Aorta (tissue), 5 donors: ENCODE measurements at regions of chr17 and their contacts with region 1.

Region 1: DNA sequence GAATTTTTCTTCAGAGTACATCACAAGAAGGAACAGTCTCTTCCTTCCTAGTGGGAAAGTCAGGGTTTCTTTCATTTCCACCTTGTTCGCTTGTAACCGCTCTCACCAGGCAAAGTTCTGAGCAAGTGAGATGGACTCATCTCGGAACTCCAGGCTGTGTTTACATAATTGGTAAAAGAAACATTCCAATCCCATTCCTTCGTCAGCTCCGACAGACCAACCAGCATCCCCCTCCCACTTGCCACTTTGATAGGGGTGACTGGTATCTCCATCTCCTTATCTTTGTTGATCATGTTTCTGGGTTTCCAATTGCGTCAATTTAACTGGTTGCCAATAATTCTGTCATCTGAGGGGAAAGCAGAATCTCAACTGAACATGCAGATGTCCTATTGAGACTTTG is 36.8 kb upstream of the LYRM9 start:
- DNase-seq: no peak
- ATAC-seq: no peak
- H3K4me3 ChIP-seq: no peak overlapping the region
- H3K27ac ChIP-seq: no peak overlapping the region
- H3K4me1 ChIP-seq: no peaks in the 10 kb centered on the region
- H3K27me3 ChIP-seq: no peaks in the 10 kb centered on the region

Region 2: GRCh38 chr17:27974531-27975145 is 44.6 kb after region 1 on chr17:
- intact Hi-C with region 1: loop called in 1 of 2 experiments (anchors 5 kb)
- DNase-seq: no peak
- ATAC-seq: no peak
- H3K4me3 ChIP-seq: no peak overlapping the region
- H3K27ac ChIP-seq: no peak overlapping the region
- H3K4me1 ChIP-seq: no peaks in the 10 kb centered on the region
- H3K27me3 ChIP-seq: peaks cover 0 to 5% of the 10 kb centered on the region in 2 donors

Region 3: DNA sequence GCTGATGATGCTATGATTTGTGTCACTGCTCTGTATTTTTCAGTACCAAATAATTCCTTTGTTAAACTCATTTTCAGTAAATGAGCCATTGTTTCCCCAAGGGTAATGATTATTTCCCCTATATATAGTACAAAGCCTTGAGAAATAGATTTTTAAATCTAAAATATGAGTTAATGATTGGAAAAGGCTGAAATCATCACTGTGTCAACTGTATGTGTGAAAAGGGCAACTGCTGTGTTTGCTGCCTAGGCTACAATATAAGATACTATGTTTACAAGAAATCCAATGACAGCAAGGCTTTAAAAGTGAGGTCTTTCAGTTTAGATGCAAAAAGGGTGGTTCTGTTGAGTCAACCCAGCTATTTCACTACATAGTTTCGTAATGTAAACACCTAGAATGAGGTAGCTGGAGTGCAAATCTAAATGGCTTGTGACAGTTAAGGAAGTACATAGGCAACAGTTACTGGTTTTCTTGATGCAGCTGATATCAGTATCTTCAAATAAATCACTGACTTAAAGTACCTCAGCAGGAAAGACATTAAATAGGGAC is 127.8 kb after region 1 on chr17:
- intact Hi-C with region 1: no loop called
- DNase-seq: no peak
- ATAC-seq: no peak
- H3K4me3 ChIP-seq: no peak overlapping the region
- H3K27ac ChIP-seq: no peak overlapping the region
- H3K4me1 ChIP-seq: peaks cover 0 to 6% of the 10 kb centered on the region in 2 donors
- H3K27me3 ChIP-seq: no peaks in the 10 kb centered on the region